HEK293 (cell line): ENCODE measurements at regions of chr3 and their contacts with region 1.

Region 1: GRCh38 chr3:118884748-118885206 is 149.9 kb downstream of the IGSF11 start:
- H3K4me3 ChIP-seq: no peak overlapping the region
- H3K27ac ChIP-seq: no peak overlapping the region
- H3K4me1 ChIP-seq: no peaks in the 10 kb centered on the region
- CTCF ChIP-seq: peak; percentile 32; the same call in 1 of the 2 replicates

Region 2: GRCh38 chr3:118809696-118810498 is 74.9 kb before region 1 on chr3:
- CTCF ChIA-PET with region 1: no interaction called
- POLR2A ChIA-PET with region 1: no interaction called
- H3K4me3 ChIP-seq: no peak overlapping the region
- H3K27ac ChIP-seq: no peak overlapping the region
- H3K4me1 ChIP-seq: no peaks in the 10 kb centered on the region
- CTCF ChIP-seq: no peak

Region 3: GRCh38 chr3:118868051-118868450 is 16.7 kb before region 1 on chr3:
- CTCF ChIA-PET with region 1: interaction called, 12 read pairs
- POLR2A ChIA-PET with region 1: no interaction called
- H3K4me3 ChIP-seq: no peak overlapping the region
- H3K27ac ChIP-seq: no peak overlapping the region
- H3K4me1 ChIP-seq: no peaks in the 10 kb centered on the region
- CTCF ChIP-seq: no peak

Region 4: DNA sequence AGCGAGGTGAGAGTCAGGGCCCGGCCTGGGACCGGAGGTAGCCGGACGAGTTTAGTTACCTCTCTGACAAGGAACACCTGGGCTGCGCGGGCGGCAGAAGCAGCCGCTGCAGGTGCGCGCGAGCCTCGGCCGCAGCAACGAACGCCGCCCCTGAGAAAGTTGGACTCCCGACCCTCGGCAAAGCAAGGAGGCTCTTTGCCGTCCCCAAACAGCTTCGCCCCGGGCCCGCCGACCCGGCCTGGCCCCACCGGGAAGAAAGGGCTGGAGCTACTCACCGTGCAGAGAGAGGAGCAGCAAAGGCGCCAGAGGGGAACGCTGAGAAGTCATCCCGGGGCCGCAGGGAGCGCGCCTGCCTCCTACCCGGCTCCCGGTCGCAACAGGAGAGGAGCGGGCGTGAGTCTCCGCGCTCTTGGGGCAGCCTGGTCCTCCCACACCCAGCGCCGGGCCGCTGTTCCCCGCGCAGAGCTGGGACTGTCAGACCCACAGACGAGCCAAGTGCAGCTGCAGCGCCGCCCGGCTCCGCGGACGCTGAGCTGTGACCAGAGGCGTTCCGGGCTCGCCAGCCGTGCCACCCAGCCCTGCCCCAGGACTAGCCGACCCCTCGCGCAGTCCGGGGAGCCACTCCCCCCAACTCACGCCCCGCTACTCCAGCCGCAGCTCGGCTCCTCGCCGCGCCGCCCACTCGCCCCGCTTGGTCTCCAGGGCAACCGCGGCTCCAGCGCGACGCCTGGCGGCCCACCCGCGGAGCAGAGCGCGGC is 149.7 kb after region 1 on chr3 and contains the start of gene IGSF11:
- CTCF ChIA-PET with region 1: interaction called, 56 read pairs
- POLR2A ChIA-PET with region 1: no interaction called
- H3K4me3 ChIP-seq: peak within 1 kb of the TSS; percentile 80
- H3K27ac ChIP-seq: no peak within 1 kb of the TSS
- H3K4me1 ChIP-seq: no peaks in the 10 kb centered on the region
- CTCF ChIP-seq: peak; percentile 57

Region 5: GRCh38 chr3:119098619-119099222 is 213.9 kb after region 1 on chr3:
- CTCF ChIA-PET with region 1: interaction called, 197 read pairs
- POLR2A ChIA-PET with region 1: no interaction called
- H3K4me3 ChIP-seq: no peak overlapping the region
- H3K27ac ChIP-seq: no peak overlapping the region
- H3K4me1 ChIP-seq: no peaks in the 10 kb centered on the region
- CTCF ChIP-seq: no peak

Region 6: GRCh38 chr3:119676771-119677640 is 792.2 kb after region 1 on chr3 and contains the start of gene COX17:
- CTCF ChIA-PET with region 1: interaction called, 18 read pairs
- POLR2A ChIA-PET with region 1: no interaction called
- H3K4me3 ChIP-seq: peak within 1 kb of the TSS; percentile 81
- H3K27ac ChIP-seq: peak within 1 kb of the TSS; percentile 87
- H3K4me1 ChIP-seq: no peaks in the 10 kb centered on the region
- CTCF ChIP-seq: no peak